ENCODE measurements at regions of chr4 and their contacts with region 1.

Region 1: GRCh38 chr4:139030614-139031235 is 15.1 kb downstream of the NOCT start:
- DNase-seq: peak; percentile 90
- H3K4me3 Mint-ChIP-seq: no peak overlapping the region
- H3K27ac Mint-ChIP-seq: no peak overlapping the region
- H3K4me1 Mint-ChIP-seq: peaks cover 11% of the 10 kb centered on the region
- H3K27me3 Mint-ChIP-seq: no peaks in the 10 kb centered on the region

Region 2: GRCh38 chr4:138833974-138834373 is 196.8 kb before region 1 on chr4:
- CTCF ChIA-PET with region 1: no interaction called
- intact Hi-C with region 1: no loop called
- DNase-seq: no peak
- H3K4me3 Mint-ChIP-seq: no peak overlapping the region
- H3K27ac Mint-ChIP-seq: no peak overlapping the region
- H3K4me1 Mint-ChIP-seq: no peaks in the 10 kb centered on the region
- H3K27me3 Mint-ChIP-seq: peaks cover 8% of the 10 kb centered on the region

Region 3: DNA sequence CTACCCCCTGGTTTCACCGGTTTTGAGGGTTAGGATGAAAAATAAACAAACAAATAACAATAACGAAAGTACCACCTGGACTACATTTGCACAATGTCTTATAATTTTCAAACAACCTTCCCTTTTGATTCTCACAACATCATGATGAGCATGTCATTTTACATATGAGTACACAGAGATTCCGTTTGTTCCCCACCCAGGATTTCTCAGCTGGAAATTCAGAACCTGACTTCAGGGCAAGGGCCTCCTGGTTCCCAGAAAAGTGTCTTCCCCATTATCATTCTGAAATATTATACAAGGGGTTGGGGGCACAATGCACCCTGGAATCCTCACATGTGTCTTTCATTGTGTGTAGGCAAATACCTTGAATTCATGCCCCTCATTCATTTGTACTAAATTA is 151.0 kb before region 1 on chr4:
- CTCF ChIA-PET with region 1: no interaction called
- intact Hi-C with region 1: no loop called
- DNase-seq: no peak
- H3K4me3 Mint-ChIP-seq: no peak overlapping the region
- H3K27ac Mint-ChIP-seq: no peak overlapping the region
- H3K4me1 Mint-ChIP-seq: no peaks in the 10 kb centered on the region
- H3K27me3 Mint-ChIP-seq: no peaks in the 10 kb centered on the region

Region 4: GRCh38 chr4:139042981-139043460 is 12.3 kb after region 1 on chr4:
- CTCF ChIA-PET with region 1: interaction called, 35 read pairs
- intact Hi-C with region 1: no loop called
- DNase-seq: no peak
- H3K4me3 Mint-ChIP-seq: no peak overlapping the region
- H3K27ac Mint-ChIP-seq: no peak overlapping the region
- H3K4me1 Mint-ChIP-seq: peaks cover 10% of the 10 kb centered on the region
- H3K27me3 Mint-ChIP-seq: no peaks in the 10 kb centered on the region

Region 5: GRCh38 chr4:139077567-139078355 is 47.0 kb after region 1 on chr4:
- CTCF ChIA-PET with region 1: interaction called, 28 read pairs
- intact Hi-C with region 1: no loop called
- DNase-seq: no peak
- H3K4me3 Mint-ChIP-seq: no peak overlapping the region
- H3K27ac Mint-ChIP-seq: no peak overlapping the region
- H3K4me1 Mint-ChIP-seq: peaks cover 55% of the 10 kb centered on the region
- H3K27me3 Mint-ChIP-seq: no peaks in the 10 kb centered on the region

Region 6: GRCh38 chr4:139099366-139099982 is 68.7 kb after region 1 on chr4:
- CTCF ChIA-PET with region 1: interaction called, 11 read pairs
- intact Hi-C with region 1: loop called (anchors 1 kb)
- DNase-seq: peak; percentile 89
- H3K4me3 Mint-ChIP-seq: no peak overlapping the region
- H3K27ac Mint-ChIP-seq: no peak overlapping the region
- H3K4me1 Mint-ChIP-seq: no peaks in the 10 kb centered on the region
- H3K27me3 Mint-ChIP-seq: no peaks in the 10 kb centered on the region

Region 7: GRCh38 chr4:139295206-139295941 is 264.6 kb after region 1 on chr4:
- CTCF ChIA-PET with region 1: interaction called, 6 read pairs
- intact Hi-C with region 1: loop called (anchors 1 kb)
- DNase-seq: peak; percentile 99
- H3K4me3 Mint-ChIP-seq: peak overlapping the region; percentile 90
- H3K27ac Mint-ChIP-seq: peak overlapping the region; percentile 97
- H3K4me1 Mint-ChIP-seq: peaks cover 42% of the 10 kb centered on the region
- H3K27me3 Mint-ChIP-seq: no peaks in the 10 kb centered on the region

Region 8: DNA sequence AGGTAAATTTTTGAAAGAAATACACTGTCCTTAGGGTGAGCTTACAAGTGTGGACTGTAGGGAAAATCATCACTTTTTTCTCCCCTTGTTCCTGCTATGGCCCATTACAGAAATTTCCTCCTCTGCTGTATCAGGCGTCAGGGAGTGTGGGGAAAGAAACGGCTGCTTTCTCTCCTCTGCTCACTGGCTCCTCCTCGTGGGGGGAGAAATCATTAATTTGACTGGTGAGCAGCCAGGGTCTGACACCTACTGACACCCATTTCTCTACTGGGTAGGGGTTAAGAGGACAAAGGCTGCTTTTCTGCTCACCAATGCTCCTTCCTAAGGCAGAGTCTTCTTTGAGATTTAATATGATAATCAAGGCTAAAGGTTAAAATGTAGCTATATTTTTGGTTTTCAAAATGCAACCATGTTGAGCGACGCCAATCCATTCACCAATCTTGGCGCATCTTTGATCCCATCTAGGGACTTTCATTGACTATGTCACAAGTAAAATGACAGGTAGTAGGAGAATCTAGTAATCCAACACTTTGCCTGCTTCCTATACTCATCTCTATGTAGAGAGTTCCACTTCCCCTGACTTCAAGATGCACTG is 500.2 kb after region 1 on chr4:
- CTCF ChIA-PET with region 1: no interaction called
- intact Hi-C with region 1: loop called (anchors 5 kb)
- DNase-seq: peak; percentile 67
- H3K4me3 Mint-ChIP-seq: no peak overlapping the region
- H3K27ac Mint-ChIP-seq: no peak overlapping the region
- H3K4me1 Mint-ChIP-seq: peaks cover 3% of the 10 kb centered on the region
- H3K27me3 Mint-ChIP-seq: no peaks in the 10 kb centered on the region

Measured in activated naive CD4-positive, alpha-beta T cell treated with anti-CD3 and anti-CD28 coated beads for 36 hours (primary cell).